IMR-90 (cell line): ENCODE measurements at regions of chr7 and their contacts with region 1.

Region 1: GRCh38 chr7:87628780-87629569 is 777 bp downstream of the RUNDC3B start:
- DNase-seq: no peak
- ATAC-seq: no peak
- H3K4me3 ChIP-seq: peak overlapping the region; percentile 59
- H3K27ac ChIP-seq: no peak overlapping the region
- H3K4me1 ChIP-seq: no peaks in the 10 kb centered on the region; the same call in 1 of the 2 replicates
- H3K27me3 ChIP-seq: peaks cover 3% of the 10 kb centered on the region; the same call in 1 of the 2 replicates
- CTCF ChIP-seq: no peak
- POLR2A ChIP-seq: no peak
- RAD21 ChIP-seq: no peak

Region 2: DNA sequence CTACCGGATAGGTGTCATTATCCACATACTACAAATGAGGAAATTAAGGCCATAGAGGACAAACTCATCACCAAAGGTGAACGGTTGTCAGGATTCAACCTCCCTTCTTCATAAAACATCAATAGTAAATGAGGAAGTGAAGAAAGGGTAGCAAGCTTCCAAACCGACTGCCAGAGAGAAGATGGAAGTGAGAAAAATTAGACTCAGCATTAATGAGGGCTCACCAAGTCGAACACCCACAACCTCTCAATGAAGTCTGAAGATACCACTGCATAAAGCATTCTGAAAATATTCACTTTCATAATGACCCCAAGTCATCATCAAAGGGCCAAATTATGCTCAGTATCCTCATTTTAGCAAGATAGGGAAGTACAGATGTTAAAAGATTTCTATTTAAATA is 183.1 kb before region 1 on chr7:
- CTCF ChIA-PET with region 1: no interaction called
- POLR2A ChIA-PET with region 1: no interaction called
- dilution Hi-C with region 1: no loop called
- in situ Hi-C with region 1: no loop called
- intact Hi-C with region 1: loop called (anchors 10 kb)
- DNase-seq: no peak
- ATAC-seq: no peak
- H3K4me3 ChIP-seq: no peak overlapping the region
- H3K27ac ChIP-seq: no peak overlapping the region
- H3K4me1 ChIP-seq: no peaks in the 10 kb centered on the region
- H3K27me3 ChIP-seq: peaks cover 2% of the 10 kb centered on the region; the same call in 1 of the 2 replicates
- CTCF ChIP-seq: no peak
- POLR2A ChIP-seq: no peak
- RAD21 ChIP-seq: no peak

Region 3: GRCh38 chr7:87506246-87507180 is 122.5 kb before region 1 on chr7:
- CTCF ChIA-PET with region 1: no interaction called
- POLR2A ChIA-PET with region 1: no interaction called
- dilution Hi-C with region 1: no loop called
- in situ Hi-C with region 1: no loop called
- intact Hi-C with region 1: loop called (anchors 5 kb)
- DNase-seq: peak; percentile 43
- ATAC-seq: peak; percentile 57; the same call in 1 of the 2 replicates
- H3K4me3 ChIP-seq: no peak overlapping the region
- H3K27ac ChIP-seq: no peak overlapping the region
- H3K4me1 ChIP-seq: peaks cover 3% of the 10 kb centered on the region; the same call in 1 of the 2 replicates
- H3K27me3 ChIP-seq: peaks cover 2% of the 10 kb centered on the region; the same call in 1 of the 2 replicates
- CTCF ChIP-seq: peak; percentile 70
- POLR2A ChIP-seq: no peak
- RAD21 ChIP-seq: peak; percentile 68

Region 4: GRCh38 chr7:87574630-87575029 is 54.3 kb before region 1 on chr7:
- CTCF ChIA-PET with region 1: no interaction called
- POLR2A ChIA-PET with region 1: no interaction called
- dilution Hi-C with region 1: no loop called
- in situ Hi-C with region 1: no loop called
- intact Hi-C with region 1: loop called (anchors 5 kb)
- DNase-seq: peak; percentile 86
- ATAC-seq: peak; percentile 52
- H3K4me3 ChIP-seq: no peak overlapping the region
- H3K27ac ChIP-seq: no peak overlapping the region
- H3K4me1 ChIP-seq: peaks cover 3% of the 10 kb centered on the region; the same call in 1 of the 2 replicates
- H3K27me3 ChIP-seq: no peaks in the 10 kb centered on the region
- CTCF ChIP-seq: no peak
- POLR2A ChIP-seq: no peak
- RAD21 ChIP-seq: no peak

Region 5: DNA sequence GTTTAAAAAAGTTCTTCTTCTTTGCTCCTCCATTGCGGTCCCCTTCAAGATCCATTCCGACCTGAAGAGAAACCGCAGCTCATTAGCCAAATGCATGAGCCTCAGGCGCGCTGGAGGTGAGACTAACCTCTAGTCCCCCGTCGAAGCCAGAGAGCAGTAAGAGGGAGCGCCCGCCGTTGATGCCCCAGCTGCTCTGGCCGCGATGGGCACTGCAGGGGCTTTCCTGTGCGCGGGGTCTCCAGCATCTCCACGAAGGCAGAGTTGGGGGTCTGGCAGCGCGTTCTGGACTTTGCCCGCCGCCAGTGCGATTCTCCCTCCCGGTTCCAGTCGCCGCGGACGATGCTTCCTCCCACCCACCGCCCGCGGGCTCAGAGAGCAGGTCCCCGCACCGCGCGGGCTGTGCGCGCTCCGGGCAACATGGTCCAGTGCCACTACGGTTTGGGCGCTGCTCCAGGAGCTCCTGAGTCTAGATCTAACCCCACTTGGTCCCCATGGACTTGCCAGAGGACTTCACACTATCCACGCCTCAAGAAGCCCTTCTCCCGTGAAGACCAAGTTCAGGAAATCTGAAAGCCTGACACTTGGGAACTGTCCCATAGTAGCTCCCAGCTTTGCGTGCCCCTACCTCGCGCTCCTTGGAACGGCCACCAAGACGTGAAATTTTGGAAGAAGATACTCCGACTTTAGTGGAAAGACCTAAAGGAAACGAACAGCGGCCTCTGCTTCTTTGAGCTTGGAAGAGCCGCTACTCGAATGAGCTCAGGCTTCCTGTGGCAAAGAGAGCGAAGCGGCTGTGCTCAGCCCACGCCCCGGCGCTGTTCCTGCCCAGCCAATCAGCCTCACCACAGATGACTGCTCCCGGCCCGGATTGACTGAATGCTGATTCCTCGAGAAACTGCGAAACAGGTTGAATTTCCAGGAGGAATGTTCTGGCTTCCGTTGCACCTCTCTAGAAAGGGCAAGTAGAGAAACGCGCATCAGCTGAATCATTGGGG is 28.5 kb before region 1 on chr7 and contains the start of gene ABCB1:
- CTCF ChIA-PET with region 1: no interaction called
- POLR2A ChIA-PET with region 1: no interaction called
- dilution Hi-C with region 1: no loop called
- in situ Hi-C with region 1: no loop called
- intact Hi-C with region 1: no loop called
- DNase-seq: peak; percentile 35
- ATAC-seq: peak; percentile 98
- H3K4me3 ChIP-seq: peak within 1 kb of the TSS; percentile 32
- H3K27ac ChIP-seq: no peak within 1 kb of the TSS
- H3K4me1 ChIP-seq: no peaks in the 10 kb centered on the region
- H3K27me3 ChIP-seq: peaks cover 17% of the 10 kb centered on the region
- CTCF ChIP-seq: no peak
- POLR2A ChIP-seq: no peak
- RAD21 ChIP-seq: no peak
- total RNA-seq, gene ABCB1: 0.83 and 0.90 TPM in 2 replicates

Region 6: DNA sequence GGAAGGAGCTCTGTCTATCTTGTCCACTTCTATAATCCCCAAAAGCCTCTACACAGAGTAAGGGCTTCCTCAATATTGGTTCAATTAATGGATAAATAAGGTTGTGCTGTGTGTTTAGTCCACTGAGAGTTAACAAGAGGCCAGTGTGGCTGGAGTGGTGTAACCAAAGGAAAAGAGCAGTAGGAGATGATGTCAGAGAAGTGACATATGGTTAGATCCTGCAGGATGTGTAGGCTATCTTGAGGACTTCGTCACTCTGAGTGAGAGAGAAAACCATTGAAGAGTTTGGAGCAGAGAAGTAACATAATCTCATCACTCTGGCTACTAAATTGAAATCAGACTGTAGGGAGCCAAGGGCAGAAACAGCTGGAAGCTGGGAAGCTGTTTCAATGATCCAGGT is 13.8 kb before region 1 on chr7:
- CTCF ChIA-PET with region 1: no interaction called
- POLR2A ChIA-PET with region 1: no interaction called
- dilution Hi-C with region 1: no loop called
- in situ Hi-C with region 1: no loop called
- intact Hi-C with region 1: no loop called
- DNase-seq: no peak
- ATAC-seq: no peak
- H3K4me3 ChIP-seq: no peak overlapping the region
- H3K27ac ChIP-seq: no peak overlapping the region
- H3K4me1 ChIP-seq: no peaks in the 10 kb centered on the region
- H3K27me3 ChIP-seq: no peaks in the 10 kb centered on the region
- CTCF ChIP-seq: no peak
- POLR2A ChIP-seq: no peak
- RAD21 ChIP-seq: no peak